ENCODE measurements at regions of chr6 and their contacts with region 1.

Region 1: DNA sequence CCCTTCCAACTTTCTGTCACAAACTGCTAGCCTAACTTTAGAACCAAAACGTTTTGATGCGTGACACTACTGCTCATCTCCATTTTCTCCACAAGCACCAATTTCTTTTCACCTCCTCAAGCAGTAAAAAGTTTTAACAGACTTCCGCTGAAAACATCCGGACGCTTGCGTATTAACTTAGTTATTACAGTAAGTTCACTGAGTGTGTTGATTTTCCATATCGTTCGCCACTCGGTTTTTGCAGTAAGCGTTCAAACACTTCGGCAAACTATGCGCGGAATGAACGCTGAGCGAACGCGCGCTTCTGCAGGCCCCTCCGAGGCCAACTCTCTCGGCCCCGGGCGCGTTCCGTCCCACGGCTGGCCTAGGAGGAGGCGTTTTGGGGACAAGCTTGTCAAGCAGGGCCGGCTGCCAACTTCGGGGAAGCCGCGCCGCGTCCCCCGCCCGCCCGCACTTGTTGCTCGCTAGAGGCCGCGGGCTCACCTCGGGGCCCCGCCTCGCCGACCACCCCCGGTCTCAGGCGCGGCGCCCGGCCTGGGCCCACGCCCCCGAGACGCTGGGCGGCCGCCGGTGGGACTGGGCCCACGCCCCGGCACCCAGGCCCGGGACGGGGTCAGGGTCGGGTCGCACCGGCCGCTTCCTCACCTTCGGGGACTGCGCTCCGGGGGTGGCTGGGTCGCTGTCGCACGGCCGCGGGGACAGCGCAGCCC is 945 bp downstream of the PHF10 start:
- DNase-seq: peak; percentile 91
- H3K4me3 ChIP-seq: peak overlapping the region; percentile 50 to 89 (median 74)
- H3K27ac ChIP-seq: peak overlapping the region; percentile 87 to 98 (median 94)
- H3K4me1 ChIP-seq: peaks cover 0 to 37% (median 25%) of the 10 kb centered on the region in 4 donors
- H3K27me3 ChIP-seq: no peaks in the 10 kb centered on the region
- CTCF ChIP-seq: no peak
- EP300 ChIP-seq: no peak
- POLR2A ChIP-seq: no peak

Region 2: GRCh38 chr6:169701954-169702839 is 21.2 kb before region 1 on chr6 and contains the starts of genes C6orf120 and WDR27:
- intact Hi-C with region 1: loop called (anchors 2 kb)
- DNase-seq: peak; percentile 98
- H3K4me3 ChIP-seq: peak within 1 kb of the TSS; percentile 83 to 96 (median 94)
- H3K27ac ChIP-seq: peak within 1 kb of the TSS; percentile 92 to 98 (median 98)
- H3K4me1 ChIP-seq: peaks cover 0 to 54% (median 47%) of the 10 kb centered on the region in 4 donors
- H3K27me3 ChIP-seq: no peaks in the 10 kb centered on the region
- CTCF ChIP-seq: no peak
- EP300 ChIP-seq: no peak
- POLR2A ChIP-seq: peak; percentile 94
- total RNA-seq, gene C6orf120: 22.7 to 33.6 (median 30.3) TPM
- total RNA-seq, gene WDR27: 20.0 to 46.0 (median 24.6) TPM

Region 3: DNA sequence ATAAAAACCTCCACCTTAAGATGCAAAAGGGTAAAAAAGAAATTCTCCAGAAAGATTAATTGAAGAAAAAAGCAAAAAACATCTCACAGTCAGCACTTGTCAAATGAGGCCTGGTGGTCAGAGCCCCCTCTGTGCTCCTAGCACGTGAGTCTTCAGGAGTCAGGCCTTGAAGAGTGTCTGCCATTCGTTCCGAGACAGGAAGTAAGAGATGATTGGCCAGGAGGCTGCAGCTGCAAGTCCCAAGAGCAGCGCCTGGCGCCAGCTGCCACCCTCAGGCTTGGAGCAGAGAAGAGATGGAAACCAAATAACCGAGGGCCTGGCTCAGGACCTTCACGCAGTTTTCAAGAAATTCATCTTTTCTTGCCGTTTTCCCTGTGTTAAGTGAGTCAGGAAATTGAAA is 648.2 kb after region 1 on chr6:
- intact Hi-C with region 1: no loop called
- DNase-seq: no peak
- H3K4me3 ChIP-seq: no peak overlapping the region
- H3K27ac ChIP-seq: no peak overlapping the region
- H3K4me1 ChIP-seq: no peaks in the 10 kb centered on the region
- H3K27me3 ChIP-seq: no peaks in the 10 kb centered on the region
- CTCF ChIP-seq: no peak
- EP300 ChIP-seq: no peak
- POLR2A ChIP-seq: no peak

Measured in sigmoid colon (tissue), 7 donors.